Caco-2 (cell line): ENCODE measurements at regions of chr9 and their contacts with region 1.

Region 1: DNA sequence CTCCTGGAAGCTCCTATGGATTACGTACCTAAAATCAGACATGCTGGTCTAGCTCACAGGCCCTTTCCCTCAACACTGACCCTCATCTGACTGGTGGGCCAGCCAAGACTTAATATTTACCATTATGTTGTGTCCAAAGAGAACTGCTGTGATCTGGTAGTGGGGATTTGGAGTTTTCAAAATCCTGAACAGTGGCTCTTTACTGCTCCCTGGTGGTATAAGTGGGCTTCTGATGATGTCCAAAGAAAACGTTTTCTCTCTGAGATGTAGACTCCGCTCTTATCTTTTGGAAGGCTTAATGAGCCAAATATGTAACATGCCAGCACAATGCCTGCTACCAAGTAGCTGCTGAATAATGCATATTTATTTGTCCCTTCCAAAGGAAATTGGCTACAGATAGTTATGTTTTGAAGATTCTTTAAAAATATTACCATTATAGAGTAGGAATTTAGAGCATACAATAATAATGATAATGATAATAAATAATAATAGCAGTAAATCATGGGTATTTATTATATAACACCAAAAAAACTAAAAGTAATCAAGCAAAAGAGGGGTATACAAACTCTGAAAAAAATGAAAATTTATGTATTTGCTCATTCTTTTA is 406.6 kb upstream of the TNC start:
- DNase-seq: peak in 1 of 2 experiments; percentile 64
- H3K4me3 ChIP-seq: no peak overlapping the region
- H3K4me3 Mint-ChIP-seq: no peak overlapping the region
- H3K27ac Mint-ChIP-seq: no peak overlapping the region
- H3K4me1 ChIP-seq: no peaks in the 10 kb centered on the region; the same call in 1 of the 2 replicates
- H3K4me1 Mint-ChIP-seq: no peaks in the 10 kb centered on the region
- H3K27me3 ChIP-seq: no peaks in the 10 kb centered on the region
- H3K27me3 Mint-ChIP-seq: peaks cover 6% of the 10 kb centered on the region
- CTCF ChIP-seq: peak; percentile 62 to 68

Region 2: GRCh38 chr9:114662081-114662989 is 862.2 kb before region 1 on chr9:
- CTCF ChIA-PET with region 1: no interaction called
- POLR2A ChIA-PET with region 1: no interaction called
- intact Hi-C with region 1: loop called (anchors 5 kb)
- DNase-seq: peak; percentile 60 to 71
- H3K4me3 ChIP-seq: no peak overlapping the region
- H3K4me3 Mint-ChIP-seq: no peak overlapping the region
- H3K27ac Mint-ChIP-seq: no peak overlapping the region
- H3K4me1 ChIP-seq: no peaks in the 10 kb centered on the region
- H3K4me1 Mint-ChIP-seq: no peaks in the 10 kb centered on the region
- H3K27me3 ChIP-seq: no peaks in the 10 kb centered on the region; the same call in 1 of the 2 replicates
- H3K27me3 Mint-ChIP-seq: peaks cover 11% of the 10 kb centered on the region
- CTCF ChIP-seq: peak; percentile 83

Region 3: GRCh38 chr9:114738581-114739316 is 785.8 kb before region 1 on chr9:
- CTCF ChIA-PET with region 1: no interaction called
- POLR2A ChIA-PET with region 1: no interaction called
- intact Hi-C with region 1: loop called (anchors 1 kb)
- DNase-seq: peak; percentile 68 to 78
- H3K4me3 ChIP-seq: no peak overlapping the region
- H3K4me3 Mint-ChIP-seq: no peak overlapping the region
- H3K27ac Mint-ChIP-seq: no peak overlapping the region
- H3K4me1 ChIP-seq: no peaks in the 10 kb centered on the region
- H3K4me1 Mint-ChIP-seq: no peaks in the 10 kb centered on the region
- H3K27me3 ChIP-seq: no peaks in the 10 kb centered on the region
- H3K27me3 Mint-ChIP-seq: no peaks in the 10 kb centered on the region
- CTCF ChIP-seq: peak; percentile 75 to 83

Region 4: GRCh38 chr9:114953917-114954316 is 570.6 kb before region 1 on chr9:
- CTCF ChIA-PET with region 1: no interaction called
- POLR2A ChIA-PET with region 1: no interaction called
- intact Hi-C with region 1: no loop called
- DNase-seq: no peak
- H3K4me3 ChIP-seq: no peak overlapping the region
- H3K4me3 Mint-ChIP-seq: no peak overlapping the region
- H3K27ac Mint-ChIP-seq: no peak overlapping the region
- H3K4me1 ChIP-seq: no peaks in the 10 kb centered on the region
- H3K4me1 Mint-ChIP-seq: no peaks in the 10 kb centered on the region
- H3K27me3 ChIP-seq: no peaks in the 10 kb centered on the region
- H3K27me3 Mint-ChIP-seq: peaks cover 11% of the 10 kb centered on the region
- CTCF ChIP-seq: no peak

Region 5: DNA sequence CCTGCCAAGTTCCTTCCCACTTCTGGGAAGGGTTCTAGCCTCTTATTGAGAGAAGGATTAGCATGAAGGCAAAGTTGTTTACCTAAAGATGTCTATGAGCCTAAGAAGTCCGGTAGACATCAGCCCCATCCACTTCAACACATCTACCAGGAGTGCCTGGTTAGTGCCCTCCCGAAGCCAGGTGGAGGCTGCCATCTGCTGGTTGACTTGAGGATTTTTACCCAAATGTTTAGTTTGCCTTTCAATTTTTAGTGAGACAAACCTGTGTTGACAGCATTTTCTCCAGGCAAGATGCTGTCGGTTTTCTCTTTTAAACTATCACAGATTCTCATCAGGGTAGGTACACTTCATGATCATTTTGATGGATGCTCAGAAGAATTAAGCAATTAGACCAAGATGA is 510.6 kb before region 1 on chr9:
- CTCF ChIA-PET with region 1: no interaction called
- POLR2A ChIA-PET with region 1: no interaction called
- intact Hi-C with region 1: loop called (anchors 1 kb)
- DNase-seq: peak; percentile 77 to 78
- H3K4me3 ChIP-seq: no peak overlapping the region
- H3K4me3 Mint-ChIP-seq: no peak overlapping the region
- H3K27ac Mint-ChIP-seq: no peak overlapping the region
- H3K4me1 ChIP-seq: peaks cover 13% of the 10 kb centered on the region
- H3K4me1 Mint-ChIP-seq: peaks cover 29% of the 10 kb centered on the region
- H3K27me3 ChIP-seq: no peaks in the 10 kb centered on the region
- H3K27me3 Mint-ChIP-seq: no peaks in the 10 kb centered on the region
- CTCF ChIP-seq: peak; percentile 77 to 85

Region 6: GRCh38 chr9:115226127-115226526 is 298.4 kb before region 1 on chr9:
- CTCF ChIA-PET with region 1: no interaction called
- POLR2A ChIA-PET with region 1: no interaction called
- intact Hi-C with region 1: loop called (anchors 1 kb)
- DNase-seq: no peak
- H3K4me3 ChIP-seq: no peak overlapping the region
- H3K4me3 Mint-ChIP-seq: no peak overlapping the region
- H3K27ac Mint-ChIP-seq: no peak overlapping the region
- H3K4me1 ChIP-seq: no peaks in the 10 kb centered on the region
- H3K4me1 Mint-ChIP-seq: peaks cover 6% of the 10 kb centered on the region
- H3K27me3 ChIP-seq: no peaks in the 10 kb centered on the region
- H3K27me3 Mint-ChIP-seq: no peaks in the 10 kb centered on the region
- CTCF ChIP-seq: peak in 1 of 2 experiments; percentile 5

Region 7: DNA sequence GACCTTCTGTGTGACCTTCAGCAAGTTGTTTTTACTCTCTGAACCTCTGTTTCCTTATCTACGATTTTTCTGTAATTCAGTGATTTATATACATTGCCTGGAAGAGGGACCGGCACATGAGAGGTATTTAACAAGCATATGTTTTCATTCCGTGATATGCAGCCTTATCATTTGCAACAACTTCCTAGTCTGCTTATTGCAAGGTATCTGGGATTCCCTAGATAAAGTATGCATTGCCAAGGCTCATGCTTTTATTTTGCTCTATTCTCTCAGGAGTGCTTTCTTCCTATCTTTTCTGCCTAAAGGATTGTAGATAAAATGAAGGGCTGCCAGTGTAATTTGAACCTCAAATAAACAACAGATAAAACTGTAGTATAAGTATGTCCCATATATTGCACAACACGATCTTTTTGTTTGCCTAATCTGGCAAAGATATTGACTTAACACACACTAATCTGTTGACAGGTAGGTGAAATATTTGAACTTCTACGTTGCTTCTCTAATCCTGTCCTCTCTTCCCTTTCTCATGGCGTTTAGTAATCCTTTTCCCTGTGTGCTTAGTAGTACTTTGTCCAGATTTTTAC is 29.4 kb before region 1 on chr9:
- CTCF ChIA-PET with region 1: no interaction called
- POLR2A ChIA-PET with region 1: no interaction called
- intact Hi-C with region 1: loop called (anchors 2 kb)
- DNase-seq: peak in 1 of 2 experiments; percentile 44
- H3K4me3 ChIP-seq: no peak overlapping the region
- H3K4me3 Mint-ChIP-seq: no peak overlapping the region
- H3K27ac Mint-ChIP-seq: no peak overlapping the region
- H3K4me1 ChIP-seq: peaks cover 20% of the 10 kb centered on the region
- H3K4me1 Mint-ChIP-seq: peaks cover 10% of the 10 kb centered on the region
- H3K27me3 ChIP-seq: no peaks in the 10 kb centered on the region
- H3K27me3 Mint-ChIP-seq: peaks cover 3% of the 10 kb centered on the region
- CTCF ChIP-seq: no peak